Ovary (tissue), 10 donors: ENCODE measurements at regions of chr9 and their contacts with region 1.

Region 1: GRCh38 chr9:83355729-83356151 is 182.5 kb downstream of the FRMD3 start:
- DNase-seq: no peak
- H3K4me3 ChIP-seq: no peak overlapping the region
- H3K27ac ChIP-seq: no peak overlapping the region
- H3K4me1 ChIP-seq: no peaks in the 10 kb centered on the region
- H3K27me3 ChIP-seq: no peaks in the 10 kb centered on the region
- CTCF ChIP-seq: no peak
- EP300 ChIP-seq: no peak
- POLR2A ChIP-seq: no peak

Region 2: GRCh38 chr9:83339435-83339834 is 16.3 kb before region 1 on chr9:
- intact Hi-C with region 1: no loop called
- DNase-seq: no peak
- H3K4me3 ChIP-seq: no peak overlapping the region
- H3K27ac ChIP-seq: no peak overlapping the region
- H3K4me1 ChIP-seq: no peaks in the 10 kb centered on the region
- H3K27me3 ChIP-seq: no peaks in the 10 kb centered on the region
- CTCF ChIP-seq: no peak
- EP300 ChIP-seq: no peak
- POLR2A ChIP-seq: no peak

Region 3: GRCh38 chr9:83403527-83404238 is 47.9 kb after region 1 on chr9:
- intact Hi-C with region 1: loop called in 1 of 4 experiments (anchors 2 kb)
- DNase-seq: no peak
- H3K4me3 ChIP-seq: no peak overlapping the region
- H3K27ac ChIP-seq: no peak overlapping the region
- H3K4me1 ChIP-seq: no peaks in the 10 kb centered on the region
- H3K27me3 ChIP-seq: no peaks in the 10 kb centered on the region
- CTCF ChIP-seq: no peak
- EP300 ChIP-seq: no peak
- POLR2A ChIP-seq: no peak

Region 4: GRCh38 chr9:84357275-84357674 is 1001.5 kb after region 1 on chr9:
- intact Hi-C with region 1: no loop called
- DNase-seq: no peak
- H3K4me3 ChIP-seq: no peak overlapping the region
- H3K27ac ChIP-seq: no peak overlapping the region
- H3K4me1 ChIP-seq: no peaks in the 10 kb centered on the region
- H3K27me3 ChIP-seq: no peaks in the 10 kb centered on the region
- CTCF ChIP-seq: no peak
- EP300 ChIP-seq: no peak
- POLR2A ChIP-seq: no peak